ENCODE measurements at regions of chr1 and their contacts with region 1.

Region 1: GRCh38 chr1:154479764-154480421 is 22.1 kb upstream of the TDRD10 start:
- DNase-seq: peak; percentile 56 to 61
- H3K4me3 ChIP-seq: no peak overlapping the region
- H3K27ac ChIP-seq: no peak overlapping the region
- H3K4me1 ChIP-seq: peaks cover 9 to 18% of the 10 kb centered on the region in 2 donors
- H3K27me3 ChIP-seq: no peaks in the 10 kb centered on the region
- CTCF ChIP-seq: peak; percentile 83 to 98 (median 96)
- POLR2A ChIP-seq: no peak

Region 2: DNA sequence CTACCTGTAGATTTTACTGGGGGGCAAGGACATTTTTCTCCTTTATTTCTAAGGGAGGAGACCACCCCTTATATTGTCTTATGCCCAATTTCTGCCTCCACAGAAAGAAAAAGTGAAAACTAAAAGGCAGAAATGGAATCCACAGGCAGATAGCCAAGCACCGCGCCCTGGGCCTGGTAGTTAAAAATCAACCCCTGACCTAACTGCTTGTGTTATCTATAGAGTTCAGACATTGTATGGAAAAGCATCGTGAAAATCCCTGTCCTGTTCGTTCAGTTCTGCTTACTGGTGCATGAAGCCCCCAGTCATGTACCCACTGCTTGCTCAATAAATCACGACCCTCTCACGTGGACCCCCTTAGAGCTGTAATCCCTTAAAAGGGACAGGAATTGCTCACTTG is 108.5 kb before region 1 on chr1:
- intact Hi-C with region 1: no loop called
- DNase-seq: no peak
- H3K4me3 ChIP-seq: no peak overlapping the region
- H3K27ac ChIP-seq: no peak overlapping the region
- H3K4me1 ChIP-seq: no peaks in the 10 kb centered on the region
- H3K27me3 ChIP-seq: no peaks in the 10 kb centered on the region
- CTCF ChIP-seq: no peak
- POLR2A ChIP-seq: no peak

Region 3: GRCh38 chr1:154431586-154432373 is 48.1 kb before region 1 on chr1:
- intact Hi-C with region 1: no loop called
- DNase-seq: no peak
- H3K4me3 ChIP-seq: no peak overlapping the region
- H3K27ac ChIP-seq: no peak overlapping the region
- H3K4me1 ChIP-seq: peaks cover 11 to 13% of the 10 kb centered on the region in 2 donors
- H3K27me3 ChIP-seq: no peaks in the 10 kb centered on the region
- CTCF ChIP-seq: no peak
- POLR2A ChIP-seq: no peak

Region 4: DNA sequence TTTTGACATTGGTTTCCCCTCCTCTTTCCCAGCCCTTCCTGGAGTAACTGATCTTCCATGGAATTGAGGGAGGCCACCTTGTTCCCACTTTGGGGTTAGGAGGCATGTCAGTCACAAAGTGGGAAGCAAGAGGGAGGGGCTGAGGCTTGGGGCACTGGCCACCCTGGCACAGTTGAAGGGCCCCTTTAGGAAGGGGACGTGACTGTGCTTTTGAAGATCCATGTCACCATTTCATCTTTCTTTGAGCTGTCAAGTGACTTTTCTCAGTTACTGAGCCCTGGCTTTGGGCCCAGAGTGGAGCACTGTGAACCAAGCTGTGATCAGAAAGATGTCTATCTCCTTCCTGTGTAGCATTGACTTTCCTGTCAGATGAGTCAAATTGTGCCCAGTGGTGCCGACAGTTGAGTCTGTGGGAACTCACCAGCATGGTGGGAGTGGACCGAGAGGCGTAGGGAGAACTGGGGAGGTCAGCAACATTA is 16.3 kb before region 1 on chr1:
- intact Hi-C with region 1: no loop called
- DNase-seq: peak in 1 of 2 donors; percentile 18
- H3K4me3 ChIP-seq: no peak overlapping the region
- H3K27ac ChIP-seq: peak overlapping the region in 1 of 3 donors; percentile 41
- H3K4me1 ChIP-seq: peaks cover 13 to 22% of the 10 kb centered on the region in 2 donors
- H3K27me3 ChIP-seq: no peaks in the 10 kb centered on the region
- CTCF ChIP-seq: no peak
- POLR2A ChIP-seq: no peak

Region 5: DNA sequence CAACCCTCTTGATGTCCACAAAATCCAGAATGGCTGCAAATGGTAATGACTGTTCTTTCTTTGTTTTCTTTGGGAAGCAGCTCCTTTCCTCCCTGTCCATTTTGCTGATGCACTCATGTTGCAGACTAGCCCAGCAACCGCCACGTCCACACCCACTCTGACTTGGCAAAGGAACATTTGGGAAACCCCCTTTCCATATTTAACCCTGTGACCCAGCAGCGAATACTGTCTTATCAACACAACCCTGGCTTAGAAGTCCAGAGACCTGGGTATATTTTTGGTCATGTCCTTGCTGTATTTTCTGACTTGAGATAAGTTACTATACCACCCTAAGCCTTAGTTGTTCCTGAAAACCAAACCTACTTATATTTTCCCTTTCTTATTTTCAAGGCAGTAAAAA is 40.4 kb after region 1 on chr1:
- intact Hi-C with region 1: no loop called
- DNase-seq: peak in 1 of 2 donors; percentile 10
- H3K4me3 ChIP-seq: no peak overlapping the region
- H3K27ac ChIP-seq: no peak overlapping the region
- H3K4me1 ChIP-seq: peaks cover 18 to 29% of the 10 kb centered on the region in 2 donors
- H3K27me3 ChIP-seq: no peaks in the 10 kb centered on the region
- CTCF ChIP-seq: no peak
- POLR2A ChIP-seq: no peak

Region 6: GRCh38 chr1:154546264-154547063 is 66.6 kb after region 1 on chr1:
- intact Hi-C with region 1: loop called (anchors 5 kb)
- DNase-seq: peak; percentile 58 to 66
- H3K4me3 ChIP-seq: no peak overlapping the region
- H3K27ac ChIP-seq: no peak overlapping the region
- H3K4me1 ChIP-seq: peaks cover 0 to 4% of the 10 kb centered on the region in 2 donors
- H3K27me3 ChIP-seq: no peaks in the 10 kb centered on the region
- CTCF ChIP-seq: peak; percentile 53 to 82 (median 72)
- POLR2A ChIP-seq: no peak